SK-N-SH (cell line): ENCODE measurements at regions of chr6 and their contacts with region 1.

Region 1: DNA sequence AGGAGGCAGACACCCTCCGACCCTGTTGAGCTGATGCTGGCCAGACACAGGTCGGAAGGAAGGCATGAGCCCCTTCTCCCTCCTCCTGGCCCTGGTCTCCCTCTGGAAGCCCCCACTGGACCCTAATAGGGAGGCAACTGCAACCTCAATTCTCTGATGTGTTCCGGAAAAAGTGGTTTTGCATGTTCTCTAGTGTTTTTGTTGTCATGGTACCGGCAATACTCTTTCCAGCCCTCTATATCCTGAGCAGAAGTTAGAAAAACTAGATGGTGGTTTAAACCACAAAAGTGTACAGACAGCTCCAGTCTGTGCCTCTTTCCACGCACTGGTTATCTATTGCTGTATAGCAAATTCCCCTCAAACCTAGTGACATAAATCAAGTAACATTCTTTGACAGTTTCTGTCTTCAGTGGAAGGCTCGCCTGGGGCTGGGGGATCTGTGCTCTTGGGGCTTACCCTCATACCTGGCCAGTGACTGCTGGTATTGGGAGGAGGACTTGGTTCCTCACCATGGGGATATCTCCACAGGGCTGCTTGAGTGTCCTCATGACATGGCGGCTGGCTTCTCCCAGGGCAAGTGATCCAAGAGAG is 37.0 kb downstream of the SYTL3 start:
- DNase-seq: no peak
- H3K4me3 ChIP-seq: no peak overlapping the region
- H3K27ac ChIP-seq: no peak overlapping the region
- H3K4me1 ChIP-seq: no peaks in the 10 kb centered on the region
- H3K27me3 ChIP-seq: no peaks in the 10 kb centered on the region
- CTCF ChIP-seq: no peak
- EP300 ChIP-seq: no peak
- RAD21 ChIP-seq: no peak

Region 2: GRCh38 chr6:158536084-158536890 is 150.6 kb before region 1 on chr6:
- CTCF ChIA-PET with region 1: interaction called, 12 read pairs
- POLR2A ChIA-PET with region 1: no interaction called
- DNase-seq: peak; percentile 90
- H3K4me3 ChIP-seq: peak overlapping the region; percentile 64 to 84
- H3K27ac ChIP-seq: peak overlapping the region in 1 of 2 experiments; percentile 87; a peak in 2 of 4 replicates
- H3K4me1 ChIP-seq: peaks cover 0 to 8% of the 10 kb centered on the region in 2 experiments; a peak in 1 of 4 replicates
- H3K27me3 ChIP-seq: no peaks in the 10 kb centered on the region
- CTCF ChIP-seq: no peak
- EP300 ChIP-seq: no peak
- RAD21 ChIP-seq: no peak

Region 3: GRCh38 chr6:158621694-158622544 is 65.0 kb before region 1 on chr6:
- CTCF ChIA-PET with region 1: interaction called, 12 read pairs
- POLR2A ChIA-PET with region 1: no interaction called
- DNase-seq: peak; percentile 85
- H3K4me3 ChIP-seq: no peak overlapping the region; a peak in 1 of 4 replicates
- H3K27ac ChIP-seq: peak overlapping the region in 1 of 2 experiments; percentile 99; a peak in 2 of 4 replicates
- H3K4me1 ChIP-seq: peaks cover 0 to 45% of the 10 kb centered on the region in 2 experiments; a peak in 2 of 4 replicates
- H3K27me3 ChIP-seq: no peaks in the 10 kb centered on the region
- CTCF ChIP-seq: no peak
- EP300 ChIP-seq: peak in 1 of 2 experiments; percentile 87; a peak in 2 of 4 replicates
- RAD21 ChIP-seq: no peak; the same call in 1 of the 2 replicates

Region 4: DNA sequence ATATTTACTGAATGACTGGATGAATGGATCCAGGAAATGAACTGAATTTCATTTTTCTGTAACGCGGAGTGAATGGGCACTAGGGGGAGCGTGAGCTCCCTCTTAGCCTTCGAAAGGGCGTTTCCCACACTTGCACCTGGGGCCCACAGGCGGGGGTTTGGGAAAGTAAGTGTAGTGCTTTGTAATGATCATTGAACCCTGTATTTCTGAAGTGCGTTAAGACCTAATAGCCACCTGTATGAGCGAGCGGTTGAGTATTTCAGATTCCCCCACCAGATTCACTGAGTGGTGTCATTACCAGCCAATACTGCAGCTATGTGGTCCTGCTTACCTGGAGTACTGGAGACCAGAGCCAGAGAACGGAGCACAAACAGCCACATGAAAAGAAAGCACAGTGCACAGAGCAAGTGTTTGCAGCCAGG is 26.5 kb before region 1 on chr6:
- CTCF ChIA-PET with region 1: interaction called, 20 read pairs
- POLR2A ChIA-PET with region 1: no interaction called
- DNase-seq: peak; percentile 55
- H3K4me3 ChIP-seq: no peak overlapping the region
- H3K27ac ChIP-seq: no peak overlapping the region
- H3K4me1 ChIP-seq: peaks cover 5 to 9% of the 10 kb centered on the region in 2 experiments; a peak in 2 of 4 replicates
- H3K27me3 ChIP-seq: no peaks in the 10 kb centered on the region
- CTCF ChIP-seq: peak; percentile 61
- EP300 ChIP-seq: no peak
- RAD21 ChIP-seq: peak; percentile 50

Region 5: DNA sequence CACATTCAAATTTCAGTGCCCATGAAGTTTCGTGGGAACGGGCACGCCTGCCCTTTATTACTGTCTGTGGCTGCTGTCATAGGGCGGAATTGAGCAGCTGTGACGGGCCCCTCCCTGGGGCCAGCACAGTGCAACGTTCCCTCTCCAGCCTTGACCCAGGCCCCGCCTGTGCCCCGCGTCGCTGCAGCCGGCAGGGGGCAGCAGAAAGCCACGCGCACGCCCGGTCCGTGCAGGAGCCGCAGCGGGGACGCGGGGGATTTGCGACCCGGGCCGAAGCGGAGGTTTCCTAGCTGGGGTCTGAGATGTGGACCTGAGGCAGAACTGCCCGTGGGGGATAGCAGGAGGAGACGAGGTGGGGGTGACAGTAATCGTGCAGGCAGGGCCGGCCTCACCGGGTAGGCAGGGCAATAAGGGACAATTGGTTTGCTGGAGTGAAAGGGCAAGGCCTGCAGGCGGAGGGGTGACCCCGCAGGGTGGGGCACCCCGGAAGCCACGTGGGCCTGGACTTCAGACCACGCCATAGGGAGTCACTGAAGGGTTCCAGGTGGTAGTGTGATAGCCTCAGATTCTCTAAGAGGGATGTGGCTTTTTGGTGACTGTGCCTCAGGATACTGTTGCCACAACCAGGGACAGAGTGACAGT is 17.4 kb after region 1 on chr6:
- CTCF ChIA-PET with region 1: interaction called, 21 read pairs
- POLR2A ChIA-PET with region 1: no interaction called
- DNase-seq: peak; percentile 93
- H3K4me3 ChIP-seq: peak overlapping the region; percentile 41 to 75
- H3K27ac ChIP-seq: no peak overlapping the region
- H3K4me1 ChIP-seq: peaks cover 15 to 28% of the 10 kb centered on the region in 2 experiments
- H3K27me3 ChIP-seq: no peaks in the 10 kb centered on the region
- CTCF ChIP-seq: peak; percentile 98
- EP300 ChIP-seq: no peak
- RAD21 ChIP-seq: peak; percentile 89

Region 6: DNA sequence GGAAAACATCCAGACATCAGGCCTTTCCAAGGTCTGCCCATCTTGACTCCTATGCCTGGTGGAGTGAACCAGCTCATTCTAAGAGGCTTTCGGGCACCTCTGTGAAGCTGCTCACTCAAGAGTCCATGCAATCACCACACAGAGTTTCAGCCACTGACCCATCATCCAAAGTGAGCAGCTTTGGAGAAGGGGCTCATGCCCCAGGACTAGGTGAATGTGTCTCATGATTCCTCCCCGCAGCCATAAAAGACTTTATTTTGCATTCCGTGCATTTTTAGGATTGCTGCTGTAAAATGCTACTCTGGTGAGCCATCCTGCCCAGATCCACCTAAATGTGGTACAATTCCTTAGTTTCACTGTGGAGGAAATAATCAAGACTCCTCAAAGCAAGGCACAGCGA is 176.8 kb after region 1 on chr6:
- CTCF ChIA-PET with region 1: no interaction called
- POLR2A ChIA-PET with region 1: no interaction called
- DNase-seq: no peak
- H3K4me3 ChIP-seq: no peak overlapping the region
- H3K27ac ChIP-seq: no peak overlapping the region; a peak in 1 of 4 replicates
- H3K4me1 ChIP-seq: no peaks in the 10 kb centered on the region
- H3K27me3 ChIP-seq: no peaks in the 10 kb centered on the region
- CTCF ChIP-seq: no peak
- EP300 ChIP-seq: no peak
- RAD21 ChIP-seq: no peak